Activated T-helper 1 cell treated with anti-CD3 and anti-CD28 coated beads, Interleukin-12 subunit alpha, Interleukin-12 subunit beta, Interleukin-2, Interleukin-4 antibody, amounts not matched to agents 30 ng/mL and 10 ng/mL and 1 ng/mL, durations not matched to agents 14 hours and 24 hours and 36 hours (primary cell): ENCODE measurements at regions of chr1 and their contacts with region 1.

Region 1: GRCh38 chr1:199173356-199173755 is 534.5 kb downstream of the PTPRC start:
- DNase-seq: peak; percentile 35
- H3K4me3 Mint-ChIP-seq: peak overlapping the region; percentile 31
- H3K27ac Mint-ChIP-seq: peak overlapping the region; percentile 73
- H3K4me1 Mint-ChIP-seq: peaks cover 60% of the 10 kb centered on the region
- H3K27me3 Mint-ChIP-seq: peaks cover 2% of the 10 kb centered on the region

Region 2: DNA sequence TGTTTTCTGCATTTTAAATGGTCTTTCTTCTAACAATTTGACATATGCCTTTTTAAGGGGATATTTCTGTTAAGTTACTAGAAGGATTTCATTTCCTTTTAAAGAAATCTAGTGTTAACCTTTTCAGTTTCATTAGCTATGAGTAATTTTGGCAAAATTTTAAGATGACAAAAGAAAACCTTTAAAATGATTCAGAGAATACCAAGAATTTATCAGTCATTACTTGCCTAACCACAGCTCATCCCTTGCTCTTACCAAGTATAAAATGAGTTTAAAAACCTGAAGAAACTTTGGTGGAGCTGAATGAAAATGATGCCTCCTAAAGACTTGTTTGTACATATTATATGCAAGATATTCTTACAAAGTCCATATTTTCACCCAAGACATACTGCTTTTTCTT is 914.9 kb before region 1 on chr1:
- intact Hi-C with region 1: loop called (anchors 1 kb)
- DNase-seq: no peak
- H3K4me3 Mint-ChIP-seq: peak overlapping the region; percentile 11
- H3K27ac Mint-ChIP-seq: peak overlapping the region; percentile 78
- H3K4me1 Mint-ChIP-seq: peaks cover 50% of the 10 kb centered on the region
- H3K27me3 Mint-ChIP-seq: no peaks in the 10 kb centered on the region

Region 3: DNA sequence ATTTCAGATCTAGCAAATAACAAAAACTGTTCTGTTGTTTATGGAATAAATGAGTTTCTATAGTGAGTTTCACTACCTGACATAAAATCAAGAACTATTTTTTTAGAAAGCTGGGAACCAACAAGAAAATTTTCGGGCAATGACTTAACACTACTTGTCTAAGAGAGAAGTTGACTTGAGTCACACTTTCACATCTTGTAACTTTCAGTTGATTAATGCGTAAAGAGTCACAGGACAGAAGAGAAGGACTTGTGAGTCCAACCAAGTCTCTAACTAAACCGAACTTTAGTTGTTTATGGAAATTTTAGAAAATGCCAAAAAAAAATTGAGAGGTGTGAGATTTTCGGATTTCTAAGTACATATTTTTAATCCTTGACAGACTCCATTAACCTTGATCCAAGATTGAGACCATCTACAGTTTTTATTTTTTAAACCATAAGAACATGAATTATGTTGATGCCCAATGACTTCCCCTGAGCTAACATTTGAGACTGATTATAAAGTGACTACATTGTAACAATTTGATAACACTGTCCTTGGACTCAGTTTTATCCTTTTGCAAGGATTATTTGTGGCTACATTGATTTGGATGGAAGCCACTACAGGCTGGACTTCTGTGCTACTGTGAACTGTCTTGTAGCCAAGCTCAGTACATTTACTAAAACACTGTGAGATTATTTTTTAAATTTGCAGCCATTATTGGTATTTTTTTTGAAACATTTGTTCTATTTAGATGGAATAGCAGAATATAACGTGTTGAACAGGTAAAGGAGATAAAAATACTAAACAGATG is 250.5 kb before region 1 on chr1:
- intact Hi-C with region 1: loop called (anchors 1 kb)
- DNase-seq: no peak
- H3K4me3 Mint-ChIP-seq: peak overlapping the region; percentile 78
- H3K27ac Mint-ChIP-seq: peak overlapping the region; percentile 90
- H3K4me1 Mint-ChIP-seq: peaks cover 90% of the 10 kb centered on the region
- H3K27me3 Mint-ChIP-seq: no peaks in the 10 kb centered on the region

Region 4: GRCh38 chr1:199089393-199090122 is 83.8 kb before region 1 on chr1:
- intact Hi-C with region 1: loop called (anchors 2 kb)
- DNase-seq: peak; percentile 57
- H3K4me3 Mint-ChIP-seq: peak overlapping the region; percentile 32
- H3K27ac Mint-ChIP-seq: peak overlapping the region; percentile 71
- H3K4me1 Mint-ChIP-seq: peaks cover 53% of the 10 kb centered on the region
- H3K27me3 Mint-ChIP-seq: no peaks in the 10 kb centered on the region

Region 5: GRCh38 chr1:199226163-199226562 is 52.8 kb after region 1 on chr1:
- intact Hi-C with region 1: loop called (anchors 1 kb)
- DNase-seq: peak; percentile 26
- H3K4me3 Mint-ChIP-seq: peak overlapping the region; percentile 37
- H3K27ac Mint-ChIP-seq: peak overlapping the region; percentile 51
- H3K4me1 Mint-ChIP-seq: peaks cover 21% of the 10 kb centered on the region
- H3K27me3 Mint-ChIP-seq: peaks cover 6% of the 10 kb centered on the region

Region 6: GRCh38 chr1:199472025-199472424 is 298.7 kb after region 1 on chr1:
- intact Hi-C with region 1: no loop called
- DNase-seq: no peak
- H3K4me3 Mint-ChIP-seq: no peak overlapping the region
- H3K27ac Mint-ChIP-seq: no peak overlapping the region
- H3K4me1 Mint-ChIP-seq: no peaks in the 10 kb centered on the region
- H3K27me3 Mint-ChIP-seq: no peaks in the 10 kb centered on the region